Mammary epithelial cell (primary cell): ENCODE measurements at regions of chr13 and their contacts with region 1.

Region 1: GRCh38 chr13:109778102-109778542 is 8.3 kb downstream of the IRS2 start:
- DNase-seq: peak; percentile 59
- H3K4me3 ChIP-seq: peak overlapping the region in 2 of 3 experiments; percentile 56 to 58
- H3K27ac ChIP-seq: peak overlapping the region; percentile 22
- H3K4me1 ChIP-seq: peaks cover 46% of the 10 kb centered on the region
- H3K27me3 ChIP-seq: no peaks in the 10 kb centered on the region
- CTCF ChIP-seq: no peak

Region 2: DNA sequence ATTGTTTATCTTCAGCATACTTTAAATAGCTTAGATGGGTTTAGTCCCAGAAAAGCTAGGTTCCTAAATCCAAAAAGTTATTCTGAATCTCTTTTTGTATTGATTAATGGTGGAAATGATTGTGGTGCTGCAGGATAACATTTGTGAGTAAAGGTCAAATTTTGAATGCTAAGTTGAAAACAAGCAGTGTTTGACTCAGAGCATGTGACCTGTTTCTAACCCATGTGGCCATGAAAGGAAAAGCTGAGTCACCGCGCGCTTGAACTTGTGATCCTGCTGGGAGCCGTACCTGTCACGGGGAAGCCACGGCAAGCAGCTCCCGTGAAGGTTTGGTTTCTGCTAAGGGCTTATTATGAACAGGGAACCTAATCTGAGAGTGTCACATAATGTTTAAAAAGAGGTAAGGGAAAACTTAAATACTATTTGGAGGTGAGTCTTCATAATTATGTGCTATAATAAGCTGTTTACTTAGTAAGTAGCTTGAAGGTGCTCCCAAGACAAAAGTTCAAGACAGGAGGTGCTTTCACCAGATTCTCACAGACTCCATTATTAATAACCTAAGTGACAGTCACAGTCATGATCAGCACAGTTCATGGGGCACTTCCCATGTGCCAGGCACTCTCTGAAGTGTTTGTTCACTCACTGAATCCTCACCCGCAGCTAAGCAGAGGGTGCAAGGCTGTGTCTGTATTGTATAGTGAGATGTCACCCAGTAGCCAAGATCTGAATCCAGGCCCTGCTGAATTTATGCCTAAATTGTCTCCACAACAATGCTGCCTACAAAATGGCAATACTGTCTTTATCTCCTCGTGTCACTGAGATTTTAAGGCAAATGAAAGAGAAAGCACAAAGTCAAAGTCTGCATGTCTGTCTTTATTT is 862.2 kb before region 1 on chr13:
- CTCF ChIA-PET with region 1: no interaction called
- dilution Hi-C with region 1: no loop called
- in situ Hi-C with region 1: no loop called
- intact Hi-C with region 1: loop called (anchors 1 kb)
- DNase-seq: peak; percentile 94
- H3K4me3 ChIP-seq: no peak overlapping the region
- H3K27ac ChIP-seq: peak overlapping the region; percentile 50
- H3K4me1 ChIP-seq: peaks cover 25% of the 10 kb centered on the region
- H3K27me3 ChIP-seq: no peaks in the 10 kb centered on the region
- CTCF ChIP-seq: no peak

Region 3: DNA sequence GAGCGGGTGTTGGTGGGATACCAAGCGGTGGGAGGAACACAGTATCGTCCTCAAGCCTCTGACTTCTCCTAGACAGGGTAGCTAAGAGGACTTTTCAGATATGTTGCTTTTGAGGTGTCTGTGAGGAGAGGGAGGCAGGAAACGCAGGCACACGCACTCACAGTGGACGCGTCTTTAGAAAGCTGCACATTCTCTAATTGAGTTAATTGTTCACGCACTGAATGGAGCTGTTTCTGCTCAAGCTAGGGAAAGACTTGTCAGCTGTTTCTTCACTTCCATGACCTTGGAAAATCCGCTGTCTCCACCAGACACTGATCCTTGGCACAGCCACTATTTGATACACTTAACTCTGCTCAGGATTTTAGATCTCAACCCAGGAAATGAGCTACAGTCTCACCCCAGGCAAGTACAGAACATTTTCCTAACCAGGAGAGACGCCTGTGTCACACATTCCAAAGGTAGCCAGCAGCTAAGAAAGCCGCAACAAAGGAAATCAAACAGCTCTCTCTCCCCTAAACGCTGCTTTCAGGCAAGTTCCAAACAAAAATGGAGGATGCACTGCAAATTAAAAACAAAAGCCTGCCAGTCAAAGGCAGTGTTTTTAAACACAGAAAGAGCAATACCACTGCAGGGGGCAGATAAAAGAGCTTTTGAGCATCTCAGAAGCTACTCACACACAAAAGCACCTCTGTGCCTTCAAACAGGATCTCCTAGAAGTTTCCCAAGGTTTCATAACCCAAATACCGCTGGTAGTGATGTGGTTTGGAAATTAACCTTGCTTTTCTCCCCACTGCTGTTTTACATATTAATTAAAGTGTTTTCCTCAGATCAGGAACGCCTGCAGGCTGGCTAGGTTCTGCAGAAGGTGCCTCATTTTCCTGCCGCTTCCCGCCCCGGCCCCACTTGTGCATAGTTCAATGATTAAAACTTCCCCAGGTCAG is 49.1 kb before region 1 on chr13:
- CTCF ChIA-PET with region 1: no interaction called
- dilution Hi-C with region 1: no loop called
- in situ Hi-C with region 1: no loop called
- intact Hi-C with region 1: no loop called
- DNase-seq: peak; percentile 63
- H3K4me3 ChIP-seq: no peak overlapping the region
- H3K27ac ChIP-seq: no peak overlapping the region
- H3K4me1 ChIP-seq: peaks cover 13% of the 10 kb centered on the region
- H3K27me3 ChIP-seq: no peaks in the 10 kb centered on the region
- CTCF ChIP-seq: no peak

Region 4: DNA sequence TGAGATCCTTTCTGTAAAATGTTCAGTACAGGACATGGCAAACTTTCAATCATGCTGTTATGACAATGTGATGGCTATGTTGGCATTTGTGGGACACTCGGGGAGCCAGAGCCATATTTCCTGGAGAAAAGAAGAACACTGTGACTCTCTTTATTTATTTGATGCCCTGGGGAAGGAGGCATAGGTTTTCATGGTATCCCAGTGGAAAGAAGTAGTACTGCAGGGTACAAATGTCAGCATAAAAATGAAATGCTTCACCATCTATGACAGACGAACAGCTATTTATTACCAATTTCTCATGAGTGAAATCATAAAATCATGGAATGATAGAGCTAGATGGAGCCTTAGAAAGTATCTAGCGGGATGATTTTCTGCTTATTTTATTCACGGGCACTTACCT is 311.7 kb after region 1 on chr13:
- CTCF ChIA-PET with region 1: no interaction called
- dilution Hi-C with region 1: no loop called
- in situ Hi-C with region 1: no loop called
- intact Hi-C with region 1: no loop called
- DNase-seq: no peak
- H3K4me3 ChIP-seq: no peak overlapping the region
- H3K27ac ChIP-seq: no peak overlapping the region
- H3K4me1 ChIP-seq: peaks cover 13% of the 10 kb centered on the region
- H3K27me3 ChIP-seq: no peaks in the 10 kb centered on the region
- CTCF ChIP-seq: peak; percentile 32 to 43